ENCODE measurements at regions of chrX and their contacts with region 1.

Region 1: DNA sequence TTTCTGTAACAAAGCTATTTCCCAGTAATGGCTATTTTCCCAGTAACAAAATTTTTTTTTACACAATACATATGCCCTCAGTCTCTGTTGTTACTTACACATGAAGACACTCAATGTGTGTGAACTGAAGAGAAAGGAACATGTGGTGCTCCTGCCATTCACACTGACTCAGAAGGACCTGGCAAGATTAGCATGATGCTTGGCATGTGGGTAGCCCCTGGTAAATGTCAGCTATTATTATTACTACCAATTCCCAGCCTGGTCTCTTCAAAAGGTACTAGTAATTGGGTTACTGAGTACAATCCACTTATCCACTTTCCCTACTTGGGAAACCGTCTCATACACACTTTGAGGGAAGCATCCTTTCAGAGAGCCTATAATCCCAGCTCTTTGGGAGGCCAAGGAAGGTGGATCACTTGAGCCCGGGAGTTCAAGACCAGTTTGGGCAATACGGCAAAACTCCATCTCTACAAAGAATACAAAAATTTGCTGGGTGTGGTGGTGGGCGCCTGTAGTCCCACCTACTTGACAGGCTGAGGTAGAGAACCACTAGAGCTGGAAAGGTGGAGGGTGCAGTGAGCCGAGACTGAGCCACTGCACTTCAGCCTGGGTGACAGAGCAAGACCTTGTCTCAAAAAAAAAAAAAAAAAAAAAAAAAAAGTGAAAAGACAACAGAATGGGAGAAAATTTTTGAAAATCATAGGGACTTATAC is 14.6 kb downstream of the RBBP7 start:
- DNase-seq: no peak
- H3K4me3 Mint-ChIP-seq: no peak overlapping the region
- H3K27ac Mint-ChIP-seq: peak overlapping the region; percentile 72
- H3K4me1 Mint-ChIP-seq: peaks cover 51% of the 10 kb centered on the region
- H3K27me3 Mint-ChIP-seq: no peaks in the 10 kb centered on the region

Region 2: GRCh38 chrX:16719334-16720084 is 136.0 kb before region 1 on chrX and contains the start of gene SYAP1:
- intact Hi-C with region 1: loop called (anchors 10 kb)
- DNase-seq: peak; percentile 88
- H3K4me3 Mint-ChIP-seq: peak within 1 kb of the TSS; percentile 90
- H3K27ac Mint-ChIP-seq: peak within 1 kb of the TSS; percentile 90
- H3K4me1 Mint-ChIP-seq: peaks cover 20% of the 10 kb centered on the region
- H3K27me3 Mint-ChIP-seq: no peaks in the 10 kb centered on the region
- total RNA-seq, gene SYAP1: 21.3 and 22.6 TPM in 2 replicates

Region 3: GRCh38 chrX:16870095-16870860 is 14.8 kb after region 1 on chrX and contains the start of gene RBBP7:
- intact Hi-C with region 1: loop called (anchors 2 kb)
- DNase-seq: peak; percentile 87
- H3K4me3 Mint-ChIP-seq: peak within 1 kb of the TSS; percentile 96
- H3K27ac Mint-ChIP-seq: peak within 1 kb of the TSS; percentile 98
- H3K4me1 Mint-ChIP-seq: peaks cover 19% of the 10 kb centered on the region
- H3K27me3 Mint-ChIP-seq: peaks cover 5% of the 10 kb centered on the region
- total RNA-seq, gene RBBP7: 163 and 164 TPM in 2 replicates